Endothelial cell of umbilical vein (primary cell): ENCODE measurements at regions of chr1 and their contacts with region 1.

Region 1: DNA sequence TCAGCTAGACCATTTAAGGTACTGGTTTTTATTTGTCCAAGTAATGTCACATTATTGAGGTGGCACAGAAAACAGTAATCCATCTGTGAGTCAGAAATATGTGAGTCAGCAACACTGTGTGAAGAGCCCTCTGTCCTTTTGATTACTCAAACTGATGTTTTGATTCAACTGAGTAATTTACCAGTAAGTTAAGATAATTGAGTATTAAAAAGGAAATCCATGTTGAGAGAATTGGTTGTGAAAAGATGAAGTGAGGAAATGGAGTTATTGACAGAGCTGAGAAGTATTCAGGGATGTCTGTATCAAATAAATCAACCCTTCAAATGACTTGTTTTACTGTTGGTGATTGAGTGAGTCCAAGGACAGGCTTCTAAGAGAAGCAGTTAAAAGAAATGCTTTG is 302.7 kb upstream of the SGIP1 start:
- DNase-seq: peak; percentile 40
- H3K4me3 ChIP-seq: no peak overlapping the region
- H3K27ac ChIP-seq: no peak overlapping the region
- H3K4me1 ChIP-seq: no peaks in the 10 kb centered on the region
- H3K27me3 ChIP-seq: no peaks in the 10 kb centered on the region
- CTCF ChIP-seq: no peak
- POLR2A ChIP-seq: no peak

Region 2: DNA sequence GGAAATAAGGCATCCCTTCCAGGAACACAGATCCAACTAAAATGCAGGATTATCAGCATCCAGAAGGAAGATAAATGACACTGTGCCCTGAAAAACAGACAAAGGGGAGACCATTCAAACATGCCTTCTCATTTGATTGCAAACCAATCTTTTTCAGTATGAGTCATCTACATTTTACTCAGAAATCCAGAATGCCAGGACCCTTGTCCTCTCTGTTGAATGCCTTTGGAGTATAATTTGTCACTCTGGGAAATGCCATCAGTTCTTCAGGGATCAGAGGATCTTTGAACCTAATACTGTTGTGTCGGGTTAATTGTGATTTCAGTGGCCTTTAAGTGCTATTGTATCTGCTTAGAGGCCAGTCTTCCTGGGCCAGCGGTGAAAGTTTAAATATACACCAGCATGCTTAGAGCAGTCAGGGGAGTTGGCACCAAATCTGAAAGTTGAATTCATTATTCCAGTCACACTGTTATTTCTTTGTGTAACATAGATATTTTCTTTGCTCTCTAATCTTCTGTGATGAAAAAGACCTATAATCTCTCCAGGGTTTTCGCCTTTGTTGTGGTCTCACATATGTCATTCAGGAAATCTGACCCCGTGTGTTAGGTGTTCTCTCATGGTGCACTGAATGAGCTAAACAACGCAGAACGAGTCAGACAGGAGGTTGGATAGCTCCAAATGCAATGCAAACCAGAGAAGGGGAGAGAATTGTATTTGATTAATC is 62.1 kb before region 1 on chr1:
- CTCF ChIA-PET with region 1: interaction called, 3 read pairs
- POLR2A ChIA-PET with region 1: no interaction called
- dilution Hi-C with region 1: no loop called
- intact Hi-C with region 1: loop called (anchors 2 kb)
- DNase-seq: no peak
- H3K4me3 ChIP-seq: no peak overlapping the region
- H3K27ac ChIP-seq: no peak overlapping the region
- H3K4me1 ChIP-seq: no peaks in the 10 kb centered on the region
- H3K27me3 ChIP-seq: peaks cover 3% of the 10 kb centered on the region in 2 experiments
- CTCF ChIP-seq: no peak
- POLR2A ChIP-seq: no peak